Activated CD4-positive, alpha-beta memory T cell treated with anti-CD3 and anti-CD28 coated beads for 36 hours (primary cell): ENCODE measurements at regions of chr10 and their contacts with region 1.

Region 1: DNA sequence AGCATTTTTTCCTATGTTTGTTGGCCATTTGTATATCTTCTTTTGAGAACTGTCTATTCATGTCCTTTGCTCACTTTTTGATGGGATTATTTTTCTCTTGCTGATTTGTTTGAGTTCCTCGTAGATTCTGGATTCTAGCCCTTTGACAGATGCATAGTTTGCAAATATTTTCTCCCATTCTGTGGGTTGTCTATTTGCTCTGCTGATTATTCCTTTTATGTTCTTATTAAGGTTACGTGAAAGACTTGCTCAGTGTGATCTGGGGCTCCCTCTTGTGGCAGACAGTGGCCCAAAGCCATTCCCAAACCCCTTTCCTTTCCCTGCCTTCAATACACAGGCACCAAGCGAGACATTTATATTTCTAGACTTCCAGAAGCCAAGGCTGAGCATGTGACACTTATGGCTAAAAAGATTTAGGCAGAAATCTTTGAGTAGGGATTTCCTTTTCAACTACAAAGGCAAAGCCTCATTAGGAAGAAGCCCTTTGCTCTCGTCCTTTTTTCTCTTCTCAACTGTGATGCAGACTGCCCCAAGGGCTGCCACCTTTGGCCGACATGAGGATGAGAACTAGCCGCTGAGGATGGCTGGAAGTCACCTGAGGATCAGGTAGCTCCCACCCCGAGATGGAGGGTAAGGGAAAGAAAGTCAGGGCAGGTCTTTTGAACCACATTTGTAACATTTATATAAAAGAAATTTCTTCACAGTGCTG is 23.6 kb downstream of the ST8SIA6 start:
- DNase-seq: peak; percentile 70
- H3K4me3 Mint-ChIP-seq: no peak overlapping the region
- H3K27ac Mint-ChIP-seq: no peak overlapping the region
- H3K4me1 Mint-ChIP-seq: peaks cover 52% of the 10 kb centered on the region
- H3K27me3 Mint-ChIP-seq: no peaks in the 10 kb centered on the region

Region 2: GRCh38 chr10:16828114-16828568 is 602.7 kb before region 1 on chr10:
- CTCF ChIA-PET with region 1: interaction called, 3 read pairs
- POLR2A ChIA-PET with region 1: no interaction called
- intact Hi-C with region 1: loop called (anchors 5 kb)
- DNase-seq: peak; percentile 61
- H3K4me3 Mint-ChIP-seq: no peak overlapping the region
- H3K27ac Mint-ChIP-seq: no peak overlapping the region
- H3K4me1 Mint-ChIP-seq: no peaks in the 10 kb centered on the region
- H3K27me3 Mint-ChIP-seq: no peaks in the 10 kb centered on the region

Region 3: GRCh38 chr10:17029581-17030271 is 401.1 kb before region 1 on chr10:
- CTCF ChIA-PET with region 1: no interaction called
- POLR2A ChIA-PET with region 1: no interaction called
- intact Hi-C with region 1: loop called (anchors 5 kb)
- DNase-seq: peak; percentile 93
- H3K4me3 Mint-ChIP-seq: peak overlapping the region; percentile 69
- H3K27ac Mint-ChIP-seq: peak overlapping the region; percentile 85
- H3K4me1 Mint-ChIP-seq: peaks cover 69% of the 10 kb centered on the region
- H3K27me3 Mint-ChIP-seq: no peaks in the 10 kb centered on the region

Region 4: DNA sequence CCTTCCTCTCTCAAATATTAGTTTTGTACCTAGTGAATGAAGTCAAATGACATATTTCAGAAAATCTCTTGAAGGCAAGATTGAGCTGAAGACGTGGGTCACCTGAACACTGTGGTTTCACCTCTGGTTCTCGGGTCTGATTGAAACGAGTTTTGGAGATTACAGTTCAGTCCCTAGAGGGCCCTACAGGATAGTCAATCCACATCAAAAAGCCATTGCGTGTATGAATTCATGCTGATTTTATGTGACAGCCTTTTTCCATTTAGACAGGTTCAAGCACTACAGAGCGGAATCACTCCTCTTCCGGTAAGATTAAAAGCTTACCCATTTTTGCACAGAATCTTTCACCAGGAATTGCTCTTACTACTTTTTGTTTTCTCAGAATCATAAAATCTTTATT is 140.6 kb before region 1 on chr10:
- CTCF ChIA-PET with region 1: interaction called, 18 read pairs
- POLR2A ChIA-PET with region 1: no interaction called
- intact Hi-C with region 1: loop called (anchors 1 kb)
- DNase-seq: peak; percentile 12
- H3K4me3 Mint-ChIP-seq: no peak overlapping the region
- H3K27ac Mint-ChIP-seq: no peak overlapping the region
- H3K4me1 Mint-ChIP-seq: peaks cover 5% of the 10 kb centered on the region
- H3K27me3 Mint-ChIP-seq: peaks cover 18% of the 10 kb centered on the region

Region 5: GRCh38 chr10:17443707-17444387 is 13.0 kb after region 1 on chr10:
- CTCF ChIA-PET with region 1: interaction called, 3 read pairs
- POLR2A ChIA-PET with region 1: interaction called, 3 read pairs
- intact Hi-C with region 1: loop called (anchors 1 kb)
- DNase-seq: peak; percentile 38
- H3K4me3 Mint-ChIP-seq: peak overlapping the region; percentile 25
- H3K27ac Mint-ChIP-seq: no peak overlapping the region
- H3K4me1 Mint-ChIP-seq: peaks cover 13% of the 10 kb centered on the region
- H3K27me3 Mint-ChIP-seq: peaks cover 17% of the 10 kb centered on the region

Region 6: DNA sequence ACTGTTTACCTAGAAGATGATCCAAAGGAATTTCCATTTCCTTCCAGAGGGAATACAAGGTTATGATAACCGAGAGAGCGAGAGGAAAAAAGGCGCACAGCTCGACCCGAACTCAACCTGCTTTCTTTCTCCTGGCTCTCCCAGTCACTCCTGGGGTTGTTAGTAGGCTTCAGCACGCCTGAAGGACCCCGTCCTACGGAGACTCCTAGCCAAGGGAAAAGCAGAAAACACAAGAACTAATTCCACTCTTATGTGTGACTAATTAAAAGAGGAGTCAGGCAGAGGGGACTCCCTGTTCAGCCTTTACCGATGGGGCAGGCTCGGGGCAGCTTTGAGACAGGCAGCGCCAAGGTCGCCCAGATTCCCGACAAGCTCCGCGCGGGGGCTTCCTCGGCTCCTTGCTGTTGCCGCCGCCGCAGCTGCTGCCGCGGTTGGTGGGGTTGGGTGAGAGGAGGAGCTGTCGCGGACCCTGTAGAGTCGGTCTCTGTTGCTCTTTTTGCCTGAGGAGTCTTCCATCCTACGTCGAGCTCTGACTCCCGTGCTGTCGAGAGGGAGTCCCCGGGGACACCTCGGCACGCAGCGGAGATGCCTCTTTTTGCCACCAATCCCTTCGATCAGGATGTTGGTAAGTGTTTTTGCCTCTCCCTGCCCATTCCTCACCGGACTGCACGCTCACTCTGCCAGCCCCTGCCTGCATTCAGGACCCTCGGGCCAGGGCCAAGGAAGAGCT is 213.1 kb after region 1 on chr10 and contains the start of gene STAM:
- CTCF ChIA-PET with region 1: no interaction called
- POLR2A ChIA-PET with region 1: no interaction called
- intact Hi-C with region 1: loop called (anchors 5 kb)
- DNase-seq: peak; percentile 94
- H3K4me3 Mint-ChIP-seq: peak within 1 kb of the TSS; percentile 95
- H3K27ac Mint-ChIP-seq: peak within 1 kb of the TSS; percentile 99
- H3K4me1 Mint-ChIP-seq: peaks cover 53% of the 10 kb centered on the region
- H3K27me3 Mint-ChIP-seq: no peaks in the 10 kb centered on the region
- total RNA-seq, gene STAM: 24.5 to 29.9 TPM